GM13976 (cell line): ENCODE measurements at regions of chr1 and their contacts with region 1.

Region 1: DNA sequence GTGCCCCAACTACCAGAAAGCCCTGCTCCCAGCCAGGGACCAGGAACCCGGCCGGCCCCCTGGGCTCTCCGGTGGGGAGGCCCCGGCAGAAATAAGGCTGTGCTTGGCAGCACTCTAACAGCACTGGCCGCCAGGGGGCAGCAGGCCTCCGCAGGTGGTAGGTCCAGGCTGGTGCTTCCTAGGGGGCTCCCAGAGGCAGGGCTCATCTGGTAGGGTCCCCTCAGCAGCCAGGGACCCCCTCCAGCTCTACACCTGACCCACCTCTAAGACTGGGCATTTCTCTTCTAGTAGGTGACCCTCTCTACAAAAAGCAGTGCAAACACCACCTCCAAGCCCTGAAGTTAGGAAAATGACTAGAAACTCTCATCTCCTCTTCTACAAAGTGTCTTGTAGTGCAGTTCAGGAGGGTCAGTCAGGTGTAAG is 85.6 kb downstream of the STUM start:
- DNase-seq: peak; percentile 86
- CTCF ChIP-seq: peak; percentile 95

Region 2: DNA sequence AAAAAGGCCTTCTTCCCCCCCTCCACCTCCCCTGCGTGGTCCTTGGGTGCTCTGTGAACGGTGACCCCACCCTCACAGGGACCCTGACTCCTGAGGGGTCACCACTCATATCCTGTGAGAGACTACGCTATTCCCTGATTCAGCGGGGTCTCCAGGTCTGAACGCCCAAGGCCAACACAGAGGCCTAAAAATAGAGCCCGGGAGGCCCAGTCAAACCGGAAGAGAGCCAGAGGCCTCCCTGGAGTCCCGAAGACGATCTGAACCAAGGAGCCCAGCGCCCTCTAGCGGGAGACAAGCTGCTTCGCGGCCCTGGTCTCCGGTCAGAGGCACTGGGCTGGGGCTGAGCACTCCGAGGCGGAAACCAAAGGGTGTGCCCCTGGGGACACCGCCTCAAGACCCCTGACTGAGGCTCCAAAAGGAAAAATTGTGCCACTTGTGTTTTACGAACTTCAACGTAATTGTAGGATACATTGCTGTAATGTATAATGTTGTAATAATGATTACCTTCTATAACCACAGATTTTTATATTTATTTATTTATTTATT is 193.9 kb after region 1 on chr1:
- in situ Hi-C with region 1: loop called (anchors 5 kb)
- DNase-seq: peak; percentile 93
- CTCF ChIP-seq: peak; percentile 85